ENCODE measurements at regions of chr3 and their contacts with region 1.

Region 1: DNA sequence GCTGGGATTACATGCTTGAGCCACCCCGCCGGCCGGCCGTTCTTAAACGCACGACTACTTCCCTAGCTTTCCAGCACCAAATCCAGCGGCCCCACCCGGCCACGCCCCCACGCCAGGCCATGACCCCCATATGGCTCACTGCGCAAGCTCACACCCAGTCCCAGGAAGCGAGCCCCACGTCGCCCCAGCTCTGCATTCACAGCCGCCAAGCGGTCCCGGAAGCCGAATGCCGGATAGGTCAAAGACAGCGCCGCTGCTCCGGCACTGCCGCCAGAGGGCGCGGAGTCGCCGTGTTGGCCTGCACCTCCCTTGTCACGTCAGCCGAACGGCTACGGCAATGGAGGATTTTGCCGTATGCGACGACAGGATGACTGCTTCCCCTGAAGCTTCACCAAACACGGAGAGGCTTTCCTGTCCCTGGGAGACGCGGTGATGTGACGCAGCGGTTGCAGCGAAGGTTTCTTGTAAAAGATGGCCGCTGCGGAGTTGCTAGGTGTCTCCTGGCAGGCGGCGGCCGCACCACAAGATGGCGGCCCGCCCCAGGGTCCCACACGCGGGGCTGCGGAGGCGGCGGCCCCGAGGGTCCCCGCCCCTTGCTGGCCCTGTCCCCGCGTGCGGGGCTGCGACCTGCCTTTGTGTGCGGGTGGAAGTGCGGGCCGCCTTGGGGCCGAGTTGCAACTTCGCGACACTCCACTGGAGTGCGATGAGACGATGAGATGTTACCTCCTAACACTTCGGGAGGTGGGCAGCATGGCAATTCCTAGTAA is 30.2 kb upstream of the RPN1 start:
- H3K4me3 Mint-ChIP-seq: peak overlapping the region; percentile 77
- H3K27ac Mint-ChIP-seq: peak overlapping the region; percentile 91
- H3K4me1 Mint-ChIP-seq: peaks cover 58% of the 10 kb centered on the region
- H3K27me3 Mint-ChIP-seq: no peaks in the 10 kb centered on the region

Region 2: GRCh38 chr3:128650096-128651050 is 30.4 kb before region 1 on chr3 and contains the start of gene RPN1:
- intact Hi-C with region 1: loop called (anchors 2 kb)
- H3K4me3 Mint-ChIP-seq: peak within 1 kb of the TSS; percentile 86
- H3K27ac Mint-ChIP-seq: peak within 1 kb of the TSS; percentile 91
- H3K4me1 Mint-ChIP-seq: peaks cover 33% of the 10 kb centered on the region
- H3K27me3 Mint-ChIP-seq: no peaks in the 10 kb centered on the region

Region 3: DNA sequence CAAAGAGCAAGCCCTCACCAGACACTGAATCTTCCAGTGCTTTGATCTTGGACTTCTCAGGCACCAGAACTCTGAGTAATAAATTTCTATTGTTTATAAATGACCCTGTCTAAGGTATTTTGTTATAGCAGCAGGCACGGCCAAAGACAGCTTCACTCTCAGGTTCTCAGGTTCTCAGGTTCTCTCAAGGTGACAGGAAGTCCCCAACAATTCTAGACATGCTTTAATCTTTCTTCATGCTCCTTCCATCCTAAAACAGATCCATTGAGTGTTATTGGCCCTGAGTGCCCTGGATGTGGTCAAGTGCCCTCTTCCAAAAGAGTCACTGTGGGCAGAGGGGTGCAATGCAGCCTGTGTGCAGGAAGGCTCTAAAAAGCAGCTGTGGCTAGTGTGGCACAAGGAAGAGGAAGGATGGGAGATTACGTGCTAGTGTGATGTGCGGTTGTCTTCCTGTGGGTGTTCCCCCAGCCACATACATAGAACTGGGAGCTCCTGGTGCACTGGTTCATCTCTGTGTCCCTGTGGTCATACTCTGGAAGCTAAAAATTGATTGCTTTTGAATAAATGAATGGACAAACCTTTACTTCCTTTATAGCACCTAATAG is 34.2 kb after region 1 on chr3:
- intact Hi-C with region 1: no loop called
- H3K4me3 Mint-ChIP-seq: no peak overlapping the region
- H3K27ac Mint-ChIP-seq: peak overlapping the region; percentile 35
- H3K4me1 Mint-ChIP-seq: peaks cover 67% of the 10 kb centered on the region
- H3K27me3 Mint-ChIP-seq: no peaks in the 10 kb centered on the region

Region 4: GRCh38 chr3:128725932-128726690 is 45.3 kb after region 1 on chr3 and contains the start of gene RAB7A:
- intact Hi-C with region 1: loop called (anchors 1 kb)
- H3K4me3 Mint-ChIP-seq: peak within 1 kb of the TSS; percentile 97
- H3K27ac Mint-ChIP-seq: peak within 1 kb of the TSS; percentile 94
- H3K4me1 Mint-ChIP-seq: peaks cover 69% of the 10 kb centered on the region
- H3K27me3 Mint-ChIP-seq: no peaks in the 10 kb centered on the region

Region 5: GRCh38 chr3:128794770-128795649 is 114.2 kb after region 1 on chr3:
- intact Hi-C with region 1: loop called (anchors 2 kb)
- H3K4me3 Mint-ChIP-seq: no peak overlapping the region
- H3K27ac Mint-ChIP-seq: no peak overlapping the region
- H3K4me1 Mint-ChIP-seq: peaks cover 72% of the 10 kb centered on the region
- H3K27me3 Mint-ChIP-seq: no peaks in the 10 kb centered on the region